ENCODE measurements at regions of chrX and their contacts with region 1.

Region 1: GRCh38 chrX:48521353-48522243 is at the start of gene EBP:
- DNase-seq: peak; percentile 84 to 96 (median 92)
- ATAC-seq: peak; percentile 95 to 98 (median 95)
- H3K4me3 ChIP-seq: peak within 1 kb of the TSS; percentile 61 to 76
- H3K4me3 Mint-ChIP-seq: peak within 1 kb of the TSS; percentile 85 to 89 (median 85)
- H3K27ac ChIP-seq: peak within 1 kb of the TSS; percentile 92
- H3K27ac Mint-ChIP-seq: peak within 1 kb of the TSS; percentile 93 to 97
- H3K4me1 ChIP-seq: peaks cover 12 to 39% of the 10 kb centered on the region in 2 experiments
- H3K4me1 Mint-ChIP-seq: peaks cover 26 to 41% (median 30%) of the 10 kb centered on the region in 3 donors
- H3K27me3 ChIP-seq: no peaks in the 10 kb centered on the region
- H3K27me3 Mint-ChIP-seq: no peaks in the 10 kb centered on the region
- total RNA-seq, gene EBP: 41.1 to 60.4 (median 46.1) TPM

Region 2: GRCh38 chrX:48487362-48487785 is 34.2 kb before region 1 on chrX:
- CTCF ChIA-PET with region 1: no interaction called
- POLR2A ChIA-PET with region 1: interaction called in 1 of 2 experiments, 13 read pairs
- DNase-seq: no peak
- ATAC-seq: no peak
- H3K4me3 ChIP-seq: no peak overlapping the region
- H3K4me3 Mint-ChIP-seq: no peak overlapping the region
- H3K27ac ChIP-seq: no peak overlapping the region
- H3K27ac Mint-ChIP-seq: no peak overlapping the region
- H3K4me1 ChIP-seq: no peaks in the 10 kb centered on the region
- H3K4me1 Mint-ChIP-seq: no peaks in the 10 kb centered on the region
- H3K27me3 ChIP-seq: no peaks in the 10 kb centered on the region
- H3K27me3 Mint-ChIP-seq: peaks cover 0 to 7% of the 10 kb centered on the region in 2 donors

Region 3: DNA sequence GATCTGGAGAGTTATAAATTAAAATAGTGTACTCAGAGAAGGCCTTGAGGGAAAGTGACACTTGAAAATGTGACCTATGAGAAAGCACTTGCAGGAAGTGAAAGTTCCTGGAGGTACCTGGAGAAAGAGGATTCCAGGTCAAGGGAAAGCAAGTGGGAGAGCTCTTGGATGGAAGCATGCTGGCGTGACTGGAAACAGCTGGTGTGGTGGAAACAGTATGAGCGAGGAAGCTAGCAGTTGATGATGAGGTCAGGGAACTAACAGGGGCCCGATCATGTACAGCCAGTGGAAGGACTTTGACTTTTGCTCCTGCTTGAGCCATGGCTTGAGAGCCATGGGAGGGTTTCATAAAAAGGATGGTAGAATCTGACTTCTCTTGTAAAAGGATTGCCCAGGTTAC is 1391.3 kb after region 1 on chrX:
- CTCF ChIA-PET with region 1: no interaction called
- POLR2A ChIA-PET with region 1: interaction called in 1 of 2 experiments, 16 read pairs
- DNase-seq: no peak
- ATAC-seq: no peak
- H3K4me3 ChIP-seq: no peak overlapping the region
- H3K4me3 Mint-ChIP-seq: no peak overlapping the region
- H3K27ac ChIP-seq: no peak overlapping the region
- H3K27ac Mint-ChIP-seq: no peak overlapping the region
- H3K4me1 ChIP-seq: peaks cover 0 to 6% of the 10 kb centered on the region in 2 experiments
- H3K4me1 Mint-ChIP-seq: peaks cover 10 to 22% (median 12%) of the 10 kb centered on the region in 3 donors
- H3K27me3 ChIP-seq: no peaks in the 10 kb centered on the region
- H3K27me3 Mint-ChIP-seq: peaks cover 0 to 14% of the 10 kb centered on the region in 2 donors